ENCODE measurements at regions of chr18 and their contacts with region 1.

Region 1: GRCh38 chr18:68735483-68736343 is 20.8 kb upstream of the TMX3 start:
- DNase-seq: peak; percentile 74
- ATAC-seq: peak; percentile 94
- H3K4me3 ChIP-seq: no peak overlapping the region
- H3K27ac ChIP-seq: no peak overlapping the region
- H3K4me1 ChIP-seq: no peaks in the 10 kb centered on the region
- H3K27me3 ChIP-seq: no peaks in the 10 kb centered on the region
- CTCF ChIP-seq: peak; percentile 83
- POLR2A ChIP-seq: no peak
- RAD21 ChIP-seq: peak; percentile 90

Region 2: DNA sequence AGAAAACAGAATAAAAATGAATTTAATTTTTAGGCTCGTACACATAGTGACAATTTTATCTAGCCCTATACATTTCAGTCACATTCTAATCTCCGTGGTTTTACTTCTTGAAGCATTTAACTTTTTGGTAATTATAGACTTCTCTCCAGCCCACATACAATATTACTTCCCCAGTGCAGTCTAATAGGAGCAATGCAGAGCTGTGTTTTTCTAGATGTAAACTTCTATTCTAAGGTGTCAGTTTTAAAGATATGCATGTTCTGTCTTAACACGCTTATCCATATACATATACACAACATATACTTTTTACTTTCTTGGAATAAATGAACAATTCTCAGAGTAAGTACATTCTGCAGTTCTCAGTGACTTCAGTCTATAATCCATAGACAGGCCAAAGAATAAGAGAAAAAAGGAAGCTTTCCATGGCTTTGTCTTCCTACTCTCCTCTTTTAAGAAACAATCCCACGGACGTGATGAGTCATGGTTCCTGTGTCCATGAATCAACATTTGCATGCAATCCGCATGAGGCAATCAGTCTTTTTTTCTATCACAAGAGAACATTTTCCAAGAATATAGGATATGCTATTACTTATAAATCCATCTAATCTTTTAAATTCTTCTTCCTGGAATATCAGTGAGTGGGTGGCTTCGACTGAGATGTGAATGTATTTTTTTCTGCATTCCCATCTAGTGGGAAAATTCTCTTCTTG is 105.0 kb after region 1 on chr18:
- CTCF ChIA-PET with region 1: no interaction called
- POLR2A ChIA-PET with region 1: no interaction called
- dilution Hi-C with region 1: no loop called
- in situ Hi-C with region 1: no loop called
- intact Hi-C with region 1: loop called (anchors 5 kb)
- DNase-seq: peak; percentile 97
- ATAC-seq: peak; percentile 71
- H3K4me3 ChIP-seq: no peak overlapping the region
- H3K27ac ChIP-seq: peak overlapping the region; percentile 99; the same call in 1 of the 2 replicates
- H3K4me1 ChIP-seq: peaks cover 9% of the 10 kb centered on the region
- H3K27me3 ChIP-seq: no peaks in the 10 kb centered on the region
- CTCF ChIP-seq: no peak
- POLR2A ChIP-seq: no peak
- RAD21 ChIP-seq: no peak